ENCODE measurements at regions of chr10 and their contacts with region 1.

Region 1: GRCh38 chr10:23438550-23439441 is at the start of gene OTUD1:
- DNase-seq: peak; percentile 94
- H3K4me3 Mint-ChIP-seq: peak within 1 kb of the TSS; percentile 94
- H3K27ac Mint-ChIP-seq: peak within 1 kb of the TSS; percentile 84
- H3K4me1 Mint-ChIP-seq: peaks cover 33% of the 10 kb centered on the region
- H3K27me3 Mint-ChIP-seq: no peaks in the 10 kb centered on the region
- total RNA-seq, gene OTUD1: 15.7 to 16.0 TPM

Region 2: DNA sequence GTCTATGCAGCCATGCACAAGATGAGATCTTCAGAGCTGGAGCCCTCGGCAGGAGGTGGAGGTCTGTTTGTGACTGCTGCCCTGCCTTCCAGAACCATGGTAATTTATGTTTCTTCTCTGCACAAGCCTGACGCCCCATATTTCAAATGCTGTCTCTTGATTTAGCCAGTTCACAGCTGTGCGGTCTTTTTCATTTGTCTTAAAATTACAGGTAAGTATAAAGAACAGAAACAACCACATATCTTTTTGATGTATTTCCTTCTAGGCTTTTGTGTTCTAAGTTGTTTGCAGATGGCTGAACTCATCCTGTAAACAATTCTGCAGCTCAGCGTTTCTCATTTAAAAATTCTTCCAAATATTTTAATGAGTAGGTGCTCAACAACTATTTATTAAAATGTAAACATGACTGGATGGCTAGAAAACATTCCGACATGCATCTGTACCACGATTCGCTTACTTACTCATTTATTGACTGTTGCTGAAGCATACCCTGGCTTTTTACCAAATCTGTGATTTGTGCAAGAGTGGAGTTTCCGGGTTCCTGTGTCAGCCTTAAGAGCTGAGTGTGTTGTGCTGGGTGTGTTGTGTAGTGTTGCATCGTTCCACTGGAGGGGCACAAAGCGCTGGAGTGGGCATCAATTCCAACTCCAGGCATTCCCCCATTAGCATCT is 783.4 kb before region 1 on chr10:
- CTCF ChIA-PET with region 1: no interaction called
- intact Hi-C with region 1: loop called (anchors 10 kb)
- DNase-seq: peak; percentile 69
- H3K4me3 Mint-ChIP-seq: peak overlapping the region; percentile 46
- H3K27ac Mint-ChIP-seq: peak overlapping the region; percentile 89
- H3K4me1 Mint-ChIP-seq: peaks cover 99% of the 10 kb centered on the region
- H3K27me3 Mint-ChIP-seq: no peaks in the 10 kb centered on the region

Region 3: GRCh38 chr10:23362879-23363792 is 75.7 kb before region 1 on chr10:
- CTCF ChIA-PET with region 1: interaction called, 3 read pairs
- intact Hi-C with region 1: loop called (anchors 1 kb)
- DNase-seq: peak; percentile 72
- H3K4me3 Mint-ChIP-seq: peak overlapping the region; percentile 68
- H3K27ac Mint-ChIP-seq: peak overlapping the region; percentile 95
- H3K4me1 Mint-ChIP-seq: peaks cover 58% of the 10 kb centered on the region
- H3K27me3 Mint-ChIP-seq: no peaks in the 10 kb centered on the region

Region 4: DNA sequence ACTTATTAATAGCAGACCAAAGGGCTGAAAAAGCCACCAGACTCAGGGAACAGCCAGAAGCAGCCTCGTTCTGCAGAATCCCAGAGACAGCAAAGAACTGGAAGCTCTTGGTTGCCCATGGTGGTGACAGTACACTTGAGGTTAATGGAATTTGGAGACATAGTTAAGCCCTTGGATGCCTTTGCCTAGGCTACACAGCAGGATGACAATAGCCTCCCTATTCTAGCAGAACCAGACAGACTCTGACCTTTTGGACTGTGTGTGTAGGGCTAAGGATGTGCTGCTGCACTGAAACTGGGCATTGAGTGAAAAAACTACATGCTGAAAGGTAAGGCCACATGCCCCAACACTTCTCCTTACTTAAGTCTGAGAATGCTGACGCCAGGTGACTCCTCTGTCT is 22.8 kb after region 1 on chr10:
- CTCF ChIA-PET with region 1: no interaction called
- intact Hi-C with region 1: no loop called
- DNase-seq: no peak
- H3K4me3 Mint-ChIP-seq: no peak overlapping the region
- H3K27ac Mint-ChIP-seq: no peak overlapping the region
- H3K4me1 Mint-ChIP-seq: peaks cover 10% of the 10 kb centered on the region
- H3K27me3 Mint-ChIP-seq: no peaks in the 10 kb centered on the region

Region 5: GRCh38 chr10:23556727-23557440 is 118.1 kb after region 1 on chr10:
- CTCF ChIA-PET with region 1: no interaction called
- intact Hi-C with region 1: no loop called
- DNase-seq: peak; percentile 31
- H3K4me3 Mint-ChIP-seq: no peak overlapping the region
- H3K27ac Mint-ChIP-seq: peak overlapping the region; percentile 57
- H3K4me1 Mint-ChIP-seq: peaks cover 24% of the 10 kb centered on the region
- H3K27me3 Mint-ChIP-seq: no peaks in the 10 kb centered on the region

Region 6: DNA sequence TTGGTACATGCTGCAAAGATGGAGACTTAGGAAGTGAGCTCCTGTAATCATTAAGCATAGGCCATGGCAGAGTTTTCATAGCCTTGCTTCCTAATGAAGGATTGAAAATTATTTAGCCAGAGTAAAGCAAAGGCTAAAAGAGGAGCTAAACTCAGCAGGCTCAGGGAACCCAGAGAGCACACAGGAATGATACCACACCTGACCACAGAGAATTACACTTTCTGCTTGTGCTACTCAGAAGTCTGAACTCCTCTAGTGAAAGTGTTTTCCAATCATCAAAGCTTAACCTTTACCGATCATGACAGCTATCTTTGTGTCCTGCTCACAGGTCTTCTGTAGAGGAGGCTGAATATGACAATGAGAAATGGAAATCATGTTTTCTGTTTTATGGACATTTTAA is 347.8 kb after region 1 on chr10:
- CTCF ChIA-PET with region 1: no interaction called
- intact Hi-C with region 1: no loop called
- DNase-seq: no peak
- H3K4me3 Mint-ChIP-seq: no peak overlapping the region
- H3K27ac Mint-ChIP-seq: no peak overlapping the region
- H3K4me1 Mint-ChIP-seq: no peaks in the 10 kb centered on the region
- H3K27me3 Mint-ChIP-seq: peaks cover 20% of the 10 kb centered on the region

Region 7: GRCh38 chr10:24383681-24384106 is 944.9 kb after region 1 on chr10:
- CTCF ChIA-PET with region 1: no interaction called
- intact Hi-C with region 1: loop called (anchors 10 kb)
- DNase-seq: peak; percentile 71
- H3K4me3 Mint-ChIP-seq: peak overlapping the region; percentile 21
- H3K27ac Mint-ChIP-seq: peak overlapping the region; percentile 86
- H3K4me1 Mint-ChIP-seq: peaks cover 12% of the 10 kb centered on the region
- H3K27me3 Mint-ChIP-seq: peaks cover 21% of the 10 kb centered on the region

Region 8: DNA sequence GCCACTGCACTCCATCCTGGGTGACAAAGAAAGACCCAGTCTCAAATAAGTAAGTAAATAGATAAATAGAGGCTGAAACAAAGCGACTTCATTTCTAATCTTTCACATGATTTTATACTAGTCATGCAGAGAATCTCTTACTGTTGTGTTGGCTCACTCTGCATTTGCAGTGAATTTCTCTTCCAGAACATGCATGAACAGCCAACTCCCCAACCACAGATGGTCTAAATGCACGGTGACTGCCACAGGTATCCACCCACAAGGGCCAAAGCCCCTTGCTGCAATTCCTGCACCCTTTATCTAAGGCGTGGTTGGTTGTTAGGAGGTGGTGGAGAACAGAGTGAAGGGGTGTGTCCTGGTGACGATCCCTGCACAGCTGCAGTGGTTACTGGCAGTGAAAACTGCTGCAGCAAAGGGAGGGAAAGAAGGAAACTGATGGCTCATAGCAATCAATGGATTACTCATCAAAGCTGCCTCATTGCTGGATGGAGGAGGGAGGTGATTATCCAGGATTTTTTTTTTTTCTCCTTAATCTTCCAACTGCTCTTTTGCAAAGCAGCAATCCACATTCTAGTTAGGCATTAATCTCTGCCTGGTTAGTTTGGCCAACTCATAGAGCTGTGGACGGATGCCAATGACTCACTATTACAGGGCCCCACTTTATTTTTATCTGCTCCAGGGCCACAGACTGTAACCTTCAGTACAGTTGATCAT is 1463.0 kb after region 1 on chr10:
- CTCF ChIA-PET with region 1: no interaction called
- intact Hi-C with region 1: loop called (anchors 5 kb)
- DNase-seq: peak; percentile 37
- H3K4me3 Mint-ChIP-seq: no peak overlapping the region
- H3K27ac Mint-ChIP-seq: no peak overlapping the region
- H3K4me1 Mint-ChIP-seq: peaks cover 33% of the 10 kb centered on the region
- H3K27me3 Mint-ChIP-seq: peaks cover 2% of the 10 kb centered on the region

Measured in activated naive CD4-positive, alpha-beta T cell treated with anti-CD3 and anti-CD28 coated beads for 36 hours (primary cell).